Endothelial cell of umbilical vein (primary cell): ENCODE measurements at regions of chr15 and their contacts with region 1.

Region 1: DNA sequence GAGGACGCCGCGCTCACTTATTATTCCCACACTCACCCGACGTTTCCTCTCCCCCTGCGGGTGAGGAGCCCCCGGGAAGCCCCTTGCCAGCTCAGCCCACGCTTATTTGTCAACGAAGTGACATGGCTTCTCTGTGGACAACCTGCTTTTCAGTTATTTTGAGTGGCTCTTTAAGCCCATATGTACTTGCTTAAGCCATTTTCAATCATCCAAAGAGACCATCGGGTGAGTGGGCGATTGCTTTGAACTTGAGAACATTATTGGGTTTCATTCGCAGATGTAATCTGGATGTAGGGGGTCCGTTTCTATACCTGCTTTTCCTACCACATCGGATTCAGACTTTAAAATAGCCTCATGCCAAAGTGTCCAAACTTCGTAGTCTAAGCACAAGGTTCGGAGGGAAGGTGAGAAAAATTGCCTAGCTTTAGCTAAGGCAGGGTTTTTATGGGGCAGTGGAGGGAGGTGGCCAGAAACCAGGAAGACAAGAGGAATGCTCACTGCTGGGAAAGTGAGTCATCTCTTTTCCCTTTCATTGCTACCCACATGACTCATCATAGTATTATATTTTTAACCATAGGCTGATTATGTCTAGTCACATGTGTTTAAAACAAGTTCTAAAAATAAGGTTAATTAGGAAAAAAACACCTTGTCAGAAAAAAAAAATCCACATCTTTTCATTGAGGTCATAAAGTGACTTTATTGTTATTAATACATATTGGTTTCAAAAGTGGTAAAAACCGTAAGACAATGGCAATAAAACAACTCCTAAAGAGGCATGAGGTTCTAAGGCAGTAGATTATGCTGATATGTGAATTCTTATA is 773.1 kb upstream of the NR2F2 start:
- DNase-seq: peak; percentile 96
- H3K4me3 ChIP-seq: peak overlapping the region in 1 of 3 experiments; percentile 10
- H3K27ac ChIP-seq: peak overlapping the region; percentile 100
- H3K4me1 ChIP-seq: peaks cover 39% of the 10 kb centered on the region
- H3K27me3 ChIP-seq: no peaks in the 10 kb centered on the region
- CTCF ChIP-seq: no peak
- POLR2A ChIP-seq: no peak

Region 2: GRCh38 chr15:94582369-94582768 is 975.1 kb before region 1 on chr15:
- CTCF ChIA-PET with region 1: no interaction called
- POLR2A ChIA-PET with region 1: no interaction called
- dilution Hi-C with region 1: no loop called
- intact Hi-C with region 1: loop called (anchors 5 kb)
- DNase-seq: peak; percentile 85
- H3K4me3 ChIP-seq: no peak overlapping the region
- H3K27ac ChIP-seq: no peak overlapping the region
- H3K4me1 ChIP-seq: peaks cover 25% of the 10 kb centered on the region
- H3K27me3 ChIP-seq: no peaks in the 10 kb centered on the region
- CTCF ChIP-seq: peak; percentile 75 to 80
- POLR2A ChIP-seq: no peak

Region 3: GRCh38 chr15:95326431-95327182 is 230.8 kb before region 1 on chr15:
- CTCF ChIA-PET with region 1: no interaction called
- POLR2A ChIA-PET with region 1: no interaction called
- dilution Hi-C with region 1: no loop called
- intact Hi-C with region 1: loop called (anchors 1 kb)
- DNase-seq: peak; percentile 75
- H3K4me3 ChIP-seq: peak overlapping the region; percentile 64 to 81 (median 65)
- H3K27ac ChIP-seq: peak overlapping the region; percentile 98
- H3K4me1 ChIP-seq: peaks cover 63% of the 10 kb centered on the region
- H3K27me3 ChIP-seq: no peaks in the 10 kb centered on the region
- CTCF ChIP-seq: peak in 1 of 2 donors; percentile 0
- POLR2A ChIP-seq: no peak

Region 4: DNA sequence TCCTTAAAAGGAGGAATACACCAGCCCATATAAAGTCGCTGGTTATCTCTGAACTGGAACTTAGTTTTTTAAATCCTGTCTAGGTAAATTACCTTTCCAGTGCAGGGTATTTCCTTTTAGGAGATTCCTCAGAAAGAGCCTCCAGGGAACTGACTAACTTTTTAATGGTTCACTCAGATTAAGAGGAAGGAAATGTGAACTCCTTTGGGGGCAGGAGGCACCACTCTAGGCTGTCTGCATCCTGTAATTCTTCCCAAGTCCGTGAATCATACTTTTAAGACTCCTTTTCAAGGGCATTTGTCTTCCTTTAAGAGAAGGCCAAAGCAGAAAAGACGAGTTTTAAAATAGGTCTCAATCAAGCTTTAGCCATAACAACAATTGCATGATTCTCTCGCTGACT is 98.2 kb before region 1 on chr15:
- CTCF ChIA-PET with region 1: interaction called, 3 read pairs
- POLR2A ChIA-PET with region 1: no interaction called
- dilution Hi-C with region 1: no loop called
- intact Hi-C with region 1: loop called (anchors 1 kb)
- DNase-seq: peak; percentile 90
- H3K4me3 ChIP-seq: peak overlapping the region in 1 of 3 experiments; percentile 51
- H3K27ac ChIP-seq: peak overlapping the region; percentile 85
- H3K4me1 ChIP-seq: peaks cover 41% of the 10 kb centered on the region
- H3K27me3 ChIP-seq: no peaks in the 10 kb centered on the region
- CTCF ChIP-seq: no peak
- POLR2A ChIP-seq: peak; percentile 65

Region 5: DNA sequence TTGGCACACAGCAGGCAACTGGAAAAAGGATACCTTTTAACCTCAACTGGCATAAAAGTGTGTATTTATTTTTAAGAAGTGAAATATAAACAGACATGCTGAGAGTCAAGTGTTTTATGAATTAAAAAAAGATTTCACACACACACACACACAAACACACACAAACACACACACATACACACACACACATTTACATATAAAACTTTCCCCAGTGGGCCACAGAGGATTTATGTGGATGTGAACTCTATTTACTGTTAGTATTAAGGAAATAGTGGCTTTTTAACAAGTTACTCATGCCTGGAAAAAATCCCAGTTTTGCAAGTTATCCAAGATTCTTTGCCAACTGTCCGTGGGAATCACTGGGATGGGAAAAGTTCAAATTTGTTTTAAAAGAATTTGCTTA is 47.2 kb after region 1 on chr15:
- CTCF ChIA-PET with region 1: no interaction called
- POLR2A ChIA-PET with region 1: interaction called, 3 read pairs
- dilution Hi-C with region 1: no loop called
- intact Hi-C with region 1: loop called (anchors 2 kb)
- DNase-seq: peak; percentile 95
- H3K4me3 ChIP-seq: no peak overlapping the region
- H3K27ac ChIP-seq: peak overlapping the region; percentile 50
- H3K4me1 ChIP-seq: peaks cover 33% of the 10 kb centered on the region
- H3K27me3 ChIP-seq: no peaks in the 10 kb centered on the region
- CTCF ChIP-seq: no peak
- POLR2A ChIP-seq: no peak

Region 6: GRCh38 chr15:95620934-95621579 is 63.6 kb after region 1 on chr15:
- CTCF ChIA-PET with region 1: no interaction called
- POLR2A ChIA-PET with region 1: no interaction called
- dilution Hi-C with region 1: no loop called
- intact Hi-C with region 1: no loop called
- DNase-seq: no peak
- H3K4me3 ChIP-seq: no peak overlapping the region
- H3K27ac ChIP-seq: no peak overlapping the region
- H3K4me1 ChIP-seq: no peaks in the 10 kb centered on the region
- H3K27me3 ChIP-seq: no peaks in the 10 kb centered on the region
- CTCF ChIP-seq: no peak
- POLR2A ChIP-seq: no peak

Region 7: GRCh38 chr15:95663146-95664100 is 106.0 kb after region 1 on chr15:
- CTCF ChIA-PET with region 1: no interaction called
- POLR2A ChIA-PET with region 1: no interaction called
- dilution Hi-C with region 1: no loop called
- intact Hi-C with region 1: no loop called
- DNase-seq: no peak
- H3K4me3 ChIP-seq: no peak overlapping the region
- H3K27ac ChIP-seq: no peak overlapping the region
- H3K4me1 ChIP-seq: no peaks in the 10 kb centered on the region
- H3K27me3 ChIP-seq: no peaks in the 10 kb centered on the region
- CTCF ChIP-seq: no peak
- POLR2A ChIP-seq: no peak

Region 8: DNA sequence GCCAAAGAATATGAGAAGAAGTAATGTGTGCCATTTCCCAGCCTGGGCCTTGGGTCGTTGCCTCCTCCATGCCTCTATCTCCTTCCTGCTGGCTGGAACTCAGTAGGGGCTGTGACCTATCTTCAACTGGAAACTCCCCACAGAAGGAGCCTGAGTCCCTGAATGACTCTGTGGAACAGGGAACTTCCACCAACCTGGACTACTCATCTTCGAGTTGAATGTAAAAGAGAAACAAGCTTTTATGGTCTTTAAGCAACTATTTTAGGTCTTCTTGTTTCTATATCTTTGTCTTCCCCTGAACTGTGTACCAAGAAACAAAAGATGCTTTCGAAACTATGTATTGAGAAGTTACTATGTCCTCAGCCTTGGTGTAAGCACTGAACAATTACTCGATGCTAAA is 417.8 kb after region 1 on chr15:
- CTCF ChIA-PET with region 1: no interaction called
- POLR2A ChIA-PET with region 1: no interaction called
- dilution Hi-C with region 1: no loop called
- intact Hi-C with region 1: no loop called
- DNase-seq: no peak
- H3K4me3 ChIP-seq: no peak overlapping the region
- H3K27ac ChIP-seq: no peak overlapping the region
- H3K4me1 ChIP-seq: no peaks in the 10 kb centered on the region
- H3K27me3 ChIP-seq: no peaks in the 10 kb centered on the region
- CTCF ChIP-seq: no peak
- POLR2A ChIP-seq: no peak

Region 9: DNA sequence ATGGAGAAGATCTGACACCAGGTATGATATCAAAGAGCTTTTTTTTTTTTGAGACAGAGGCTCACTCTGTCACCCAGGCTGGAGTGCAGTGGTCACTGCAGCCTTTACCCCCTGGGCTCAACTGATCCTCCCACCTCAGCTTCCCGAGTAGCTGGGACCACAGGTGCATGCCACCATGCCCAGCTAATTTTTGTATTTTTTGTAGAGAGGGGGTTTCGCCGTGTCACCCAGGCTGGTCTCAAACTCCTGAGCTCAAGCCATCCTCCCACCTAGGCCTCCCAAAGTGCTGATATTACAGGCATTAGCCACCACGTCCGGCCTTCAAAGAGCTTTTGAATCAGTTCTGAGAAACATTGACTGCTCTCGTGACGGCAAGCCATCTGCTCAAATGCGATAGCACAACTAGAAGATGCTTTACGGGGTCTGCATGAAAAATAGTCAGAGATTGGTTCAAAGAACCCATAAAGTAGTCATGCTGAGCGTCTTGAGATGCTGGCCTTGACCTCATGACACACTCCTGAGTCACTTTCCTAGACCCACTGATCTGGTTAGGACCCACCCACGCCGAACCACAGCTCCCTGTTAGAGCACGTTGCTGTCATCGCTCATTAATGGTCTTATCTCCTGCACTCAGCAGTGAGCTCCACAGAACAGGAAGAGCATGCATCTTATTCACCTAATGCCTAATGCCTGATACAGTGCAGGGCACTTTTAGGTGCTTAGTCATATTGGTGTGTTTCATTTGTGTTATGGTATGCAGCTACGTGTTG is 716.1 kb after region 1 on chr15:
- CTCF ChIA-PET with region 1: no interaction called
- POLR2A ChIA-PET with region 1: interaction called, 3 read pairs
- dilution Hi-C with region 1: no loop called
- intact Hi-C with region 1: loop called (anchors 2 kb)
- DNase-seq: peak; percentile 94
- H3K4me3 ChIP-seq: no peak overlapping the region
- H3K27ac ChIP-seq: peak overlapping the region; percentile 90
- H3K4me1 ChIP-seq: peaks cover 41% of the 10 kb centered on the region
- H3K27me3 ChIP-seq: no peaks in the 10 kb centered on the region
- CTCF ChIP-seq: no peak
- POLR2A ChIP-seq: peak; percentile 84